IMR-90 (cell line): ENCODE measurements at regions of chr18 and their contacts with region 1.

Region 1: DNA sequence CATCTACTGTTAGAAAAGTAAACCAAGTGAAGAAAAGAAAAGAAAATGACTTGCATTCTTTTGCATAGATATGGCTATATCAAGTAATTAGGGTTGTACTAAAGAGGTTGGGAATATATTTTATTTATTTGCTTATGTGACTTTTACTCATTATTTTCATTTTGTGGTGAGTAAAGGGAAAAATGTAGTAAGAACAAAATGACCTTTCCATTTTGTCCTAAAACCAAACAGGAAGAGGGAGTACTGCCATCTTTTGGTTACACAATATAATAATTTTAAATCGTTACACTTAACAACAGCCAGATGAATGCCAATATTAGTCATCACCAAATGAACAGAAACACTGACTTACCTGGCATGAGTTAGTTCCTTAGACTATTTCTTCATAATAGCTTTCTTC is 47.3 kb upstream of the NDUFV2 start:
- DNase-seq: peak; percentile 86
- ATAC-seq: peak; percentile 83
- H3K4me3 ChIP-seq: no peak overlapping the region
- H3K27ac ChIP-seq: no peak overlapping the region
- H3K4me1 ChIP-seq: peaks cover 3% of the 10 kb centered on the region; the same call in 1 of the 2 replicates
- H3K27me3 ChIP-seq: no peaks in the 10 kb centered on the region
- CTCF ChIP-seq: peak; percentile 58
- POLR2A ChIP-seq: no peak
- RAD21 ChIP-seq: peak; percentile 62

Region 2: GRCh38 chr18:8654503-8655451 is 400.4 kb before region 1 on chr18:
- CTCF ChIA-PET with region 1: no interaction called
- POLR2A ChIA-PET with region 1: no interaction called
- dilution Hi-C with region 1: no loop called
- in situ Hi-C with region 1: no loop called
- intact Hi-C with region 1: loop called (anchors 2 kb)
- DNase-seq: peak; percentile 34
- ATAC-seq: peak; percentile 82
- H3K4me3 ChIP-seq: no peak overlapping the region
- H3K27ac ChIP-seq: no peak overlapping the region
- H3K4me1 ChIP-seq: peaks cover 2% of the 10 kb centered on the region
- H3K27me3 ChIP-seq: no peaks in the 10 kb centered on the region; the same call in 1 of the 2 replicates
- CTCF ChIP-seq: peak; percentile 88
- POLR2A ChIP-seq: no peak
- RAD21 ChIP-seq: peak; percentile 77

Region 3: GRCh38 chr18:8696749-8697211 is 358.4 kb before region 1 on chr18:
- CTCF ChIA-PET with region 1: no interaction called
- POLR2A ChIA-PET with region 1: no interaction called
- dilution Hi-C with region 1: no loop called
- in situ Hi-C with region 1: no loop called
- intact Hi-C with region 1: loop called (anchors 1 kb)
- DNase-seq: peak; percentile 48
- ATAC-seq: peak; percentile 76
- H3K4me3 ChIP-seq: no peak overlapping the region
- H3K27ac ChIP-seq: no peak overlapping the region
- H3K4me1 ChIP-seq: peaks cover 7% of the 10 kb centered on the region
- H3K27me3 ChIP-seq: no peaks in the 10 kb centered on the region
- CTCF ChIP-seq: peak; percentile 81
- POLR2A ChIP-seq: no peak
- RAD21 ChIP-seq: peak; percentile 81

Region 4: GRCh38 chr18:8835521-8835953 is 219.6 kb before region 1 on chr18:
- CTCF ChIA-PET with region 1: no interaction called
- POLR2A ChIA-PET with region 1: no interaction called
- dilution Hi-C with region 1: no loop called
- in situ Hi-C with region 1: no loop called
- intact Hi-C with region 1: loop called (anchors 10 kb)
- DNase-seq: peak; percentile 41
- ATAC-seq: peak; percentile 53
- H3K4me3 ChIP-seq: no peak overlapping the region
- H3K27ac ChIP-seq: no peak overlapping the region
- H3K4me1 ChIP-seq: peaks cover 16% of the 10 kb centered on the region
- H3K27me3 ChIP-seq: no peaks in the 10 kb centered on the region
- CTCF ChIP-seq: no peak
- POLR2A ChIP-seq: no peak
- RAD21 ChIP-seq: no peak

Region 5: GRCh38 chr18:8998481-8999217 is 56.5 kb before region 1 on chr18:
- CTCF ChIA-PET with region 1: no interaction called
- POLR2A ChIA-PET with region 1: no interaction called
- dilution Hi-C with region 1: no loop called
- in situ Hi-C with region 1: no loop called
- intact Hi-C with region 1: loop called (anchors 5 kb)
- DNase-seq: peak; percentile 55
- ATAC-seq: peak; percentile 61
- H3K4me3 ChIP-seq: no peak overlapping the region
- H3K27ac ChIP-seq: peak overlapping the region; percentile 33; the same call in 1 of the 2 replicates
- H3K4me1 ChIP-seq: peaks cover 19% of the 10 kb centered on the region
- H3K27me3 ChIP-seq: no peaks in the 10 kb centered on the region
- CTCF ChIP-seq: no peak
- POLR2A ChIP-seq: no peak
- RAD21 ChIP-seq: no peak